Panc1 (cell line): ENCODE measurements at regions of chr11 and their contacts with region 1.

Region 1: DNA sequence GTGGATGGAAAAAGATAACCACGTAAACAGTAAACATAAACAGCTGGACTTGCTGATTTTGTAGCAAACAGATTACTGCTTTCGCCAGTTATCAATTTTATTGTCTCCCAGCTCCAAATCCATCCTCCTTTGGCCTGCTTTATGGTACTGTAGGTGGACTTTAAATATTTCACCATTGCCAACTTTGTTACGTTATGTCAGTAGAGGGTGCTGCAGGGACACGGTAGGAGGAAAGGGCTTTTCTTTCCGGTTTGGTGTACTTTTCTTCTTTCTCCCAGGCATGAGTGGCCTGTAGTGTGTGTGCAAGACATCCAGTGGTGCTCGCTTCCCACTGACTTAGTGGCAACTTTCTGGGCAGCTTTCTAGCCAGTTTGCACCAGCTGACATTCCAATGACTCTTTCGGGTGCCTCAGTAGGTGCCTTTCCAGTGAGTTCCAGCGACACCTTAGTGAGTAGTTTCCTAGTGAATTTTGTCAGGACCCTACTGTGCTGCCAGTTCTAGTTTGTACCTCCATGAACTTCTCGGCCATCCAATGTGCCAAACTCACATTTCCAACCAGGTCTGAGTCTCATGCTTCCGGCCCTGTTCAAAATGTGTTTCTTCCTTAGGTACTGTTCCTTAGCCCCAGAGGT is 267.6 kb upstream of the TENM4 start:
- DNase-seq: peak; percentile 35
- ATAC-seq: peak; percentile 84
- H3K4me3 ChIP-seq: no peak overlapping the region
- H3K27ac ChIP-seq: no peak overlapping the region
- H3K4me1 ChIP-seq: no peaks in the 10 kb centered on the region
- H3K27me3 ChIP-seq: no peaks in the 10 kb centered on the region
- CTCF ChIP-seq: peak; percentile 81

Region 2: DNA sequence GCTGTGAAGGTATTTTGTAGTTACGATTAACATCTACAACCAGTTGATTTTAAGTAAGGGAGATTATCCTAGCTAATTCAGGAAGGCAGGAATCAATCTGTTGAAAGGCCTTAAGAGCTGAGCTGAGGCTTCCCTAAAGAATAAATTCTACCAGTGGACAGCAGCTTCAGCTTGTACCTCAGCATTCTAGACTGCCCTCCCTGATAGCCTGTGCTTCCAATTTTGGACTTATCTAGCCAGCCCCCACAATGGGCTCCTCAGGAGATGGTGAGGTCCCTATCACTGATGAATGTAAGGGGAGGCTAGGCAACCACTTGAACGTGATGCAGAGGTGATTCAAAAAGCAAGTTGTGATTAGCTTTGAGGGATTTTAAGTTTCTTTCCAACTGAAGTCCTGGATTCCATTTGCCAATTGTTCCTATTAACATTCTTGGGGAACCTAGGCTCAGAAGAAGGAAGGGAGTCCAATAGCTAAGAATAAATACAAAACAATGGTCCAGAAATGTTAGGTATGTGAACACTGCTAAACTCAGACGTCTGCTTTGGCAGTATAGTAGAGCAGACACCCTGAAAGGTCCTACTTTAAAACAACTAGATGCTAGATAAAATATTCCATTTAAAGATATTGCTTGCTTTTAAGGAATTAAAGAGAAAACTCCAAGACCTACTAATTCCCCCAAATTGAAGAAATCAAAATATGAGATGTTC is 136.7 kb after region 1 on chr11:
- CTCF ChIA-PET with region 1: no interaction called
- POLR2A ChIA-PET with region 1: no interaction called
- in situ Hi-C with region 1: no loop called
- intact Hi-C with region 1: no loop called
- DNase-seq: no peak
- ATAC-seq: no peak
- H3K4me3 ChIP-seq: no peak overlapping the region
- H3K27ac ChIP-seq: no peak overlapping the region
- H3K4me1 ChIP-seq: no peaks in the 10 kb centered on the region
- H3K27me3 ChIP-seq: no peaks in the 10 kb centered on the region
- CTCF ChIP-seq: no peak

Region 3: DNA sequence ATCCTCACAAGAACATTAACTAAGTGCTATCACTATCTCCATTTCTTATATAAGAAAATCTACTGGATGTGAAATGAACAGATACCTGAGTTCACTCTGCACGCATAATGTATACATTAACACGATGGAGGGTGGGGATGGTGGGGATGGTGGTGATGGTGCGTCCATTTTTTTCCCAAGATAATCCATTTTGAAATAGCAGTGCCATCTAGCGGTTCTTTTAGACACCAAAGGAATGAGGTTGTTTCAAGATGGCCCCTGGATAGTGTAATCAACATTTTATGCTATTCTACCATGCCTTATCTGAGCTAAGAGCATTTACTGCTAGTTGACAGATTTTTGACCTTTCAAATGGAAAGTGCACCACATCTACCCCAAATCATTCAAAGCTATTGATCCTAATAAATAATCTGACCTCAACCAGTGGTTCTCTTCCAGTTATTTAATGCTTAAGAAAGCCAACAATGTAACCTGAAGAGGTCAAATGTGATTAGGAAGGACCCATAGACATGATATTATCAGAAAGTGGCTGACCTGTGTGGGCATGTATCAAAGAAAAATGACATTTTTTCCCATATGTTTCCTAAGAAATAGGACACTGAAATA is 447.1 kb after region 1 on chr11:
- CTCF ChIA-PET with region 1: no interaction called
- POLR2A ChIA-PET with region 1: no interaction called
- in situ Hi-C with region 1: no loop called
- intact Hi-C with region 1: loop called (anchors 10 kb)
- DNase-seq: peak; percentile 17
- ATAC-seq: peak; percentile 60; the same call in 1 of the 2 replicates
- H3K4me3 ChIP-seq: no peak overlapping the region
- H3K27ac ChIP-seq: no peak overlapping the region
- H3K4me1 ChIP-seq: no peaks in the 10 kb centered on the region
- H3K27me3 ChIP-seq: no peaks in the 10 kb centered on the region
- CTCF ChIP-seq: peak; percentile 75

Region 4: GRCh38 chr11:81005595-81005994 is 1297.2 kb after region 1 on chr11:
- CTCF ChIA-PET with region 1: no interaction called
- POLR2A ChIA-PET with region 1: no interaction called
- in situ Hi-C with region 1: no loop called
- intact Hi-C with region 1: loop called (anchors 10 kb)
- DNase-seq: peak; percentile 35
- ATAC-seq: peak; percentile 68; the same call in 1 of the 2 replicates
- H3K4me3 ChIP-seq: no peak overlapping the region
- H3K27ac ChIP-seq: no peak overlapping the region; the same call in 1 of the 2 replicates
- H3K4me1 ChIP-seq: peaks cover 7% of the 10 kb centered on the region; the same call in 1 of the 2 replicates
- H3K27me3 ChIP-seq: no peaks in the 10 kb centered on the region
- CTCF ChIP-seq: no peak

Region 5: GRCh38 chr11:81237139-81237538 is 1528.7 kb after region 1 on chr11:
- CTCF ChIA-PET with region 1: no interaction called
- POLR2A ChIA-PET with region 1: no interaction called
- in situ Hi-C with region 1: no loop called
- intact Hi-C with region 1: loop called (anchors 5 kb)
- DNase-seq: peak; percentile 46
- ATAC-seq: peak; percentile 95
- H3K4me3 ChIP-seq: no peak overlapping the region
- H3K27ac ChIP-seq: no peak overlapping the region
- H3K4me1 ChIP-seq: peaks cover 3% of the 10 kb centered on the region; the same call in 1 of the 2 replicates
- H3K27me3 ChIP-seq: no peaks in the 10 kb centered on the region
- CTCF ChIP-seq: peak; percentile 65; the same call in 1 of the 2 replicates